MCF 10A (cell line): ENCODE measurements at regions of chr3 and their contacts with region 1.

Region 1: DNA sequence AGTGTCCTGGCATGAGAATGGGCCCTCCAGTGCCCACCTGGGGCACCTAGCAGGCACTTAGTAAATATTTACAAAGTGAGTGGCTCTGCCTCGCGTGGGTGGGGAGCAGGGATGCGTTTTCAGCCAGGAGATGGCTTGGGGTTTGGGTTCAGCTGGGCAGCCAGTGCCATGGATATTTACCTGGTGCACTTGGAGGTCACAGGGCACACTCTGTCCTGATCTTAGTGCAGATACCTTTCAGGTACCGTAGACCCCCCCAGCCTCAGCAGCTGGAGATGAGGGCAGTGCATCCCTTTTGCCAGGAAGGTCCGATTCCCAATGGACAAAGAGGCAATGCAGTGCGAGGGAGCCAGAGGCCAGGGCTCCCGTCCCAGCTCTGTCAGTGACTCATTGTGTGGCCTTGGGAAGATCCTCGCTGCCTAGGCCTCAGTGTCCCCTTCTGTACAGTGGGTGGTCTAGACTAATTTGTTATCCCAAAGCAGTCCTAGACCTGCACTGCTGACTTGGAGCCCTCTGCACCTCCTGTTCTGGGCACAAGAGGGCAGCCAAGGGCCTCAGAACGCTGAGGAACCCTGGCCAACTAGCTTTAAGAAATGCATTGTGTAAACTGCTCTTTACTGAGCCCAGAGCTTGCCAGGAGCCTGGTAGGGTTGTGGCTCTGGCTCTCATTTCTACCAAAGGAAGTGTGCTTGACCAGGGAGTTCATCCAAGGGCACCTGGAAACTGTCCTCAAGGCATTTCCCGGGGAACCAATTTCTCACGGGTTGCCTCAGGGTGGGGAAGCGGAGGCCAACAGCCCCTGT is 16.0 kb downstream of the HDAC11 start:
- DNase-seq: peak; percentile 80
- H3K4me3 Mint-ChIP-seq: no peak overlapping the region
- H3K27ac Mint-ChIP-seq: peak overlapping the region; percentile 19
- H3K4me1 Mint-ChIP-seq: peaks cover 14% of the 10 kb centered on the region
- H3K27me3 Mint-ChIP-seq: no peaks in the 10 kb centered on the region
- CTCF ChIP-seq: peak; percentile 96

Region 2: GRCh38 chr3:13484851-13485590 is 11.1 kb before region 1 on chr3:
- CTCF ChIA-PET with region 1: interaction called, 18 read pairs
- POLR2A ChIA-PET with region 1: interaction called, 4 read pairs
- intact Hi-C with region 1: no loop called
- DNase-seq: peak; percentile 94
- H3K4me3 Mint-ChIP-seq: peak overlapping the region; percentile 28
- H3K27ac Mint-ChIP-seq: peak overlapping the region; percentile 92
- H3K4me1 Mint-ChIP-seq: peaks cover 18% of the 10 kb centered on the region
- H3K27me3 Mint-ChIP-seq: no peaks in the 10 kb centered on the region
- CTCF ChIP-seq: no peak

Region 3: GRCh38 chr3:13623099-13623654 is 127.1 kb after region 1 on chr3:
- CTCF ChIA-PET with region 1: interaction called, 3 read pairs
- POLR2A ChIA-PET with region 1: no interaction called
- intact Hi-C with region 1: loop called (anchors 1 kb)
- DNase-seq: no peak
- H3K4me3 Mint-ChIP-seq: no peak overlapping the region
- H3K27ac Mint-ChIP-seq: no peak overlapping the region
- H3K4me1 Mint-ChIP-seq: peaks cover 6% of the 10 kb centered on the region
- H3K27me3 Mint-ChIP-seq: no peaks in the 10 kb centered on the region
- CTCF ChIP-seq: no peak